ENCODE measurements at regions of chr11 and their contacts with region 1.

Region 1: GRCh38 chr11:74321487-74322188 is 10.2 kb upstream of the P4HA3 start:
- DNase-seq: peak; percentile 99
- H3K4me3 ChIP-seq: no peak overlapping the region
- H3K27ac ChIP-seq: peak overlapping the region; percentile 87
- H3K4me1 ChIP-seq: peaks cover 60% of the 10 kb centered on the region
- H3K27me3 ChIP-seq: no peaks in the 10 kb centered on the region
- CTCF ChIP-seq: peak; percentile 65 to 74
- POLR2A ChIP-seq: peak; percentile 16

Region 2: GRCh38 chr11:73982969-73983740 is 338.5 kb before region 1 on chr11:
- CTCF ChIA-PET with region 1: no interaction called
- POLR2A ChIA-PET with region 1: no interaction called
- dilution Hi-C with region 1: no loop called
- intact Hi-C with region 1: loop called (anchors 5 kb)
- DNase-seq: peak; percentile 96
- H3K4me3 ChIP-seq: peak overlapping the region; percentile 11 to 73 (median 56)
- H3K27ac ChIP-seq: peak overlapping the region; percentile 71
- H3K4me1 ChIP-seq: peaks cover 11% of the 10 kb centered on the region
- H3K27me3 ChIP-seq: no peaks in the 10 kb centered on the region
- CTCF ChIP-seq: no peak
- POLR2A ChIP-seq: peak; percentile 84

Region 3: GRCh38 chr11:74170694-74171629 is 150.7 kb before region 1 on chr11 and contains the starts of genes C2CD3 and PPME1:
- CTCF ChIA-PET with region 1: no interaction called
- POLR2A ChIA-PET with region 1: no interaction called
- dilution Hi-C with region 1: no loop called
- intact Hi-C with region 1: loop called (anchors 5 kb)
- DNase-seq: peak; percentile 100
- H3K4me3 ChIP-seq: peak within 1 kb of the TSS; percentile 67 to 93 (median 74)
- H3K27ac ChIP-seq: peak within 1 kb of the TSS; percentile 84
- H3K4me1 ChIP-seq: peaks cover 17% of the 10 kb centered on the region
- H3K27me3 ChIP-seq: no peaks in the 10 kb centered on the region
- CTCF ChIP-seq: peak in 1 of 2 donors; percentile 5
- POLR2A ChIP-seq: no peak
- total RNA-seq, gene C2CD3: 26.2 and 36.6 TPM in 2 replicates
- total RNA-seq, gene PPME1: 35.0 and 37.2 TPM in 2 replicates

Region 4: GRCh38 chr11:74288161-74288560 is 33.5 kb before region 1 on chr11:
- CTCF ChIA-PET with region 1: interaction called, 7 read pairs
- POLR2A ChIA-PET with region 1: no interaction called
- dilution Hi-C with region 1: no loop called
- intact Hi-C with region 1: loop called (anchors 2 kb)
- DNase-seq: peak; percentile 90
- H3K4me3 ChIP-seq: no peak overlapping the region
- H3K27ac ChIP-seq: peak overlapping the region; percentile 75
- H3K4me1 ChIP-seq: peaks cover 15% of the 10 kb centered on the region
- H3K27me3 ChIP-seq: no peaks in the 10 kb centered on the region
- CTCF ChIP-seq: no peak
- POLR2A ChIP-seq: no peak

Measured in endothelial cell of umbilical vein (primary cell).